HEK293T (cell line): ENCODE measurements at regions of chr17 and their contacts with region 1.

Region 1: DNA sequence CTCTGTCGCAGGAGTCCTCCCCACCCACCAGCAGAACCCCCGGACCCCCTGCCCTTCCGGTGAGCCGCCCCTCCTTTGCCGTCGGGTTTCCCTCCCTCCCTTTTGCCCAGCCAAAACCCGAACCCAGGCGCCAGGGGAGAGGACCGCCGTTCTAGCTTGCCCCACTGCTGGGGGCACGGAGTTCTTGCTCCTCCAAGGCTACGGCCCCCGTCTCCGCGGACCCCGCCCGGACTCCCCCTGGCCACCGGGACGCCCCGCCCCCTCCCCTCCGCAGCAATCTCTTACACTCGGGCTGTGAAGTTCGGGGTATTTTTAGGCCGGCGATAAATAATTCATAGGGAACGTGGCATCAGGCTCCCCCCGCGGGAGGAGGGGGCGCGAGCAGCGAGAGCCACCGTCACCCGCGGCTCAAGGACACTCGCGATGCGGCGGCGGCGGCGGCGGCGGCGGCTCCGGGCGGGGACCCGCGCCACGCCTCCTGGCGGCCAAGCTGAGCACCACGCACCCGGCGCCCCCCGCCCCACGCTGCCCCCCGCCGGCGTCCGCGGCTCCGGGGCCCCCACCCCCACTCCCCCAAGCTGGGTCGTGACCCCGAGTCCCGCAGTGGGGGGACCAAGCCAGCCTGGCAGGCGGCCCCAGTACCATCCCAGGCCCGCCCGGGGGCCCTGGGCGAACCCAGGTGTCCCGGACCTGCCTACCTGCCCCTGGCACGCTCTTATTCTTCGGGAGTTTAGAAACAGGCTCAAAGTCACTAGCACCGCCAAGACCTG is at the start of gene GRIN2C:
- DNase-seq: peak; percentile 70

Region 2: GRCh38 chr17:74842599-74843351 is 16.9 kb before region 1 on chr17:
- CTCF ChIA-PET with region 1: interaction called, 25 read pairs
- POLR2A ChIA-PET with region 1: interaction called, 5 read pairs
- DNase-seq: peak; percentile 89

Region 3: GRCh38 chr17:74881073-74881472 is 21.4 kb after region 1 on chr17:
- CTCF ChIA-PET with region 1: no interaction called
- POLR2A ChIA-PET with region 1: no interaction called
- DNase-seq: no peak